PC-3 (cell line): ENCODE measurements at regions of chr1 and their contacts with region 1.

Region 1: DNA sequence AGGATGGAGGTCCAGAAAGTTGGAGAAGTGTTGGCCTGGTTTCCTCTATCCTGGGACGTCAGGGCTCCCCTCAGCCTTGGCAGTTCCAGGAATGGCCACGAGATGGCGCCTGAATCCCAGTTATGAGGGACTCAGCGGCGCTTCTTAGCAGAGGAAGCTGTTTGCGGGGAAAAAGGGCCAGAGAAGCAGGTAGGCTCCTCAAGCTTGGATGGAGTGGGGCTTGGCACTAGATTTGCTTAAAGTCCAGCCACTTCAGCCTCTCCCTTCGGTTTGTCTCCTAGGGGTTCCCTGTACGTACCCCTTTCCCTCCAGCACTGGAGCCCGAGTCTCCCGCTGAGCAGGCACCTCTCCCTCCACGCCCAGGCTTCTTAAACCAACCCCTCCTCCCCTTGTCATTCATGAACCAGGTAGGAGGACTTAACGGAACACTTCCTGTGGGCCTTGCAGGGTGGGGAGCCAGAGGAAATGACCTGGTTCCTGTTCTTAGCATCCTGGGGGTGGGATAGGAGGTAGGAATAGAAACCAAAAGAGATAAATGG is 32.0 kb upstream of the TENT5B start:
- DNase-seq: peak; percentile 95
- ATAC-seq: peak; percentile 94
- H3K4me3 ChIP-seq: peak overlapping the region; percentile 49; the same call in 1 of the 2 replicates
- H3K27ac ChIP-seq: no peak overlapping the region
- H3K4me1 ChIP-seq: peaks cover 4% of the 10 kb centered on the region; the same call in 1 of the 2 replicates
- H3K27me3 ChIP-seq: no peaks in the 10 kb centered on the region
- CTCF ChIP-seq: peak; percentile 93

Region 2: GRCh38 chr1:27086026-27086425 is 41.3 kb after region 1 on chr1:
- CTCF ChIA-PET with region 1: no interaction called
- POLR2A ChIA-PET with region 1: no interaction called
- intact Hi-C with region 1: no loop called
- DNase-seq: peak; percentile 15
- ATAC-seq: no peak
- H3K4me3 ChIP-seq: no peak overlapping the region
- H3K27ac ChIP-seq: no peak overlapping the region
- H3K4me1 ChIP-seq: no peaks in the 10 kb centered on the region
- H3K27me3 ChIP-seq: no peaks in the 10 kb centered on the region
- CTCF ChIP-seq: no peak

Region 3: DNA sequence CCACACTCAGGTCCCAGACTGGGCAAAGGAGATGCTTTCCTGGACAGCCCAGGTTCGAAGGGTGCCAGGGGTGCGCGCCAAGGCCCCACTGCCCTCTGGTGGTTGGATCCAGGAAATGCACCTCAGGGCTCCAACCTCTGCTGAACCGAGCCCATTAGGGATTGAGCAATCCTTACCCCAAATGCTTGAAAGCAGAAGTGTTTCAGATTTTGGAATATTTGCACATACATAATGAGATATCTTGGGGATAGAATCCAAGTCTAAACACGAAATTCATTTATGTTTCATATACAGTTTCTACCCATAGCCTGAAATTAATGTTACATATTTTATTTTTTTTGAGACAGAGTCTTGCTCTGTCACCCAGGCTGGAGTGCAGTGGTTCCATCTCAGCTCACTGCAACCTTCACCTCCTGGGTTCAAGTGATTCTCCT is 52.8 kb after region 1 on chr1:
- CTCF ChIA-PET with region 1: interaction called, 102 read pairs
- POLR2A ChIA-PET with region 1: interaction called, 5 read pairs
- intact Hi-C with region 1: loop called (anchors 1 kb)
- DNase-seq: peak; percentile 86
- ATAC-seq: peak; percentile 56
- H3K4me3 ChIP-seq: no peak overlapping the region
- H3K27ac ChIP-seq: no peak overlapping the region
- H3K4me1 ChIP-seq: peaks cover 28% of the 10 kb centered on the region
- H3K27me3 ChIP-seq: no peaks in the 10 kb centered on the region
- CTCF ChIP-seq: peak; percentile 94